ENCODE measurements at regions of chr5 and their contacts with region 1.

Region 1: DNA sequence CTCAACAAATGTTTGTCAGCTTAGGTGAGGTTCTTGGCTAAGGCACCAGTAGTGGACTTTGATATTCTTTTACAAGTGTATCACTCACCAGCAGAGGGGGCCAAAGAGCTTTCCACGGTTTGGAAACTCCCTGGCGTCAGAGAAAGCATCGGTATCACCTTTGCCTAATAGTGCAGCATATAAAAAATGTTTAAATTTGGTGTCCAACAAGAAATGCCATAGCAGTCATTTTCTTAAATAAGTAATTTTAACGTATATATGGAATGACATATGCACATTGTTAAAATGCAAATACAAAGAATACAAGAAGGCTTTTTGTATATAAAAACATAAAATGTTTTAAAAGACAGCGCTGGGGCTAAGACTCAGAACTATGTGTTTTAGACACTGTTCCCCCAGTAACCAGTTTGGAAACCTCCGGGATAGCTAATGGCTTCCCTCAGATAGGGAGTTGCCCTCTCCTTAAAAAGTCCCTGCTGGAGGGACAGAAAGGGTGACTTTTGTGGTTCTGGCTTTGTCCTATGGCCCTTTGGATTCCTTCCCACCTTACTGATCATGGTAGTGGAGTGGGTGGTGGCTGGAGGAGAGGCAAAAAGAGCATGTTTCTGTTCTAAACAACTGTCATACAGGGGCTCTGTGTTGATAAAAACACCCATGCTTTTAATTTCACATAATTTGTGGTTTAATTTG is 124.6 kb downstream of the GPBP1 start:
- DNase-seq: peak; percentile 45
- H3K4me3 ChIP-seq: peak overlapping the region in 1 of 2 experiments; percentile 35; a peak in 1 of 4 replicates
- H3K27ac ChIP-seq: peak overlapping the region; percentile 43 to 63; a peak in 3 of 4 replicates
- H3K4me1 ChIP-seq: peaks cover 0 to 5% of the 10 kb centered on the region in 2 experiments; a peak in 3 of 4 replicates
- H3K27me3 ChIP-seq: no peaks in the 10 kb centered on the region
- CTCF ChIP-seq: peak; percentile 89
- EP300 ChIP-seq: no peak
- RAD21 ChIP-seq: peak; percentile 92

Region 2: GRCh38 chr5:56909294-56910209 is 388.9 kb before region 1 on chr5 and contains the start of gene SETD9:
- CTCF ChIA-PET with region 1: no interaction called
- POLR2A ChIA-PET with region 1: no interaction called
- DNase-seq: peak; percentile 98
- H3K4me3 ChIP-seq: peak within 1 kb of the TSS; percentile 77 to 82
- H3K27ac ChIP-seq: peak within 1 kb of the TSS; percentile 95 to 98
- H3K4me1 ChIP-seq: peaks cover 0 to 10% of the 10 kb centered on the region in 2 experiments; a peak in 2 of 4 replicates
- H3K27me3 ChIP-seq: no peaks in the 10 kb centered on the region
- CTCF ChIP-seq: no peak
- EP300 ChIP-seq: no peak; a peak in 1 of 4 replicates
- RAD21 ChIP-seq: no peak; the same call in 1 of the 2 replicates
- polyA plus RNA-seq, gene SETD9: 12.2 and 16.8 TPM in 2 replicates

Region 3: DNA sequence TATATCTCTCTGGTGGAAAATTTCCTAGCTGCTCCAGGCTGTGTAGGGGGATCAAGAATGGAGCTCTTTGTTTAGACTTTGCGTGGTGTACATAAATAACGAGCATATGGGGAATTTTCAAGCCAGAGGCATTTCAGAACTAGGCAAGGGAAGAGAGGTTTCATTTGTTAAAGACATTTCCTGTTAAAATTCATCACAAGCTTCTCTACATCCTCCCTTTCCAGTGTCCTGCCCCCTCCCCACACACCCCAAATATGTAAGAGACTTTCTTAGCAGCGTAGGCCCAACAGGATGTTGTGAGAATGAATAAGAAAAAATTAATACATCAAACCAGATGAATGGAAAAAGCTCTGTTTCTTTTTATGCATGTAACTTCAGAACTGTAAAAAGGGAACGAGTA is 25.7 kb after region 1 on chr5:
- CTCF ChIA-PET with region 1: interaction called, 17 read pairs
- POLR2A ChIA-PET with region 1: no interaction called
- DNase-seq: no peak
- H3K4me3 ChIP-seq: no peak overlapping the region
- H3K27ac ChIP-seq: no peak overlapping the region; a peak in 1 of 4 replicates
- H3K4me1 ChIP-seq: no peaks in the 10 kb centered on the region
- H3K27me3 ChIP-seq: no peaks in the 10 kb centered on the region
- CTCF ChIP-seq: no peak
- EP300 ChIP-seq: no peak
- RAD21 ChIP-seq: no peak

Region 4: GRCh38 chr5:57650360-57651069 is 352.1 kb after region 1 on chr5:
- CTCF ChIA-PET with region 1: interaction called, 11 read pairs
- POLR2A ChIA-PET with region 1: no interaction called
- DNase-seq: peak; percentile 5
- H3K4me3 ChIP-seq: no peak overlapping the region; a peak in 1 of 4 replicates
- H3K27ac ChIP-seq: no peak overlapping the region
- H3K4me1 ChIP-seq: no peaks in the 10 kb centered on the region
- H3K27me3 ChIP-seq: no peaks in the 10 kb centered on the region
- CTCF ChIP-seq: peak; percentile 65
- EP300 ChIP-seq: no peak
- RAD21 ChIP-seq: peak; percentile 63

Region 5: DNA sequence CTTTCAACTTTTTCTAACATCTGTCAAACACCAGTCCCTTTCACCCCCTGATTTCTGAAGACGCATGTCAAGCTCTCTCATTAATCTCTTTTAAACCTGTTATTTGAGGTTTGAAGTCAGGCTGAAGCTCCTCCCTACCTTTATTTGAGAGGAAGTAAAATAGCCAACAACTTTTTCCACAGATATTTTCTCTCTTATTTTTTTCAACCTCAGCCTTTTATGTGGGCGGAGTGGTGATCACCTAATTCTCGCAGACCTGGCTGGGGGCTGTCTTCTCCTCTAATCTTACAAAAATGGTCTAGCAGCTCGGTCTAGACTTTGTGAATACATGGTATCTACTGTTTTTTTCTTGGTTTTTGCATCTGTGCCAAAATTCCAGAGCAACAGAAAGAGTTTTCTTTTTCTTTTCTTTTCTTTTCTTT is 579.9 kb after region 1 on chr5:
- CTCF ChIA-PET with region 1: interaction called, 10 read pairs
- POLR2A ChIA-PET with region 1: no interaction called
- DNase-seq: no peak
- H3K4me3 ChIP-seq: no peak overlapping the region
- H3K27ac ChIP-seq: no peak overlapping the region
- H3K4me1 ChIP-seq: no peaks in the 10 kb centered on the region
- H3K27me3 ChIP-seq: no peaks in the 10 kb centered on the region
- CTCF ChIP-seq: no peak
- EP300 ChIP-seq: no peak
- RAD21 ChIP-seq: no peak

Region 6: DNA sequence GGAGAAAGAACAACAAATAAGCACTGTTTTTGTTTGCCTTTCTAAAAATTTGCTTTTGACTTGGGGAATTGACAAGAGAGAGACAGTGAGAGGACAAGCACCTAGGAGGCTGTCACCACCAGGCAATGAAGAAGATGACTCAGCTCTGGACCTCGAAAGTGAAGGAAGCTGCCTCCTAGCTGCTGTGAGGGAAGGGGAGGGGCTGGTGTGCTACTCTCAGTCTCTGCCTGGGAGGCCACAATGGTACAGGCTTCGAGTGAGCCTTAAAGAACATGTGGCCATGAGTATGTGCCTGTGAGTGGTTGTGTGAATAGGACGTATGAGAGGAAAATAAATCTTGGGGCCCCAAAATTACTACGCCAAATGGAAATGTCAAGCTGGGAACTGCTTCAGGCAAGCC is 1168.5 kb after region 1 on chr5:
- CTCF ChIA-PET with region 1: interaction called, 96 read pairs
- POLR2A ChIA-PET with region 1: no interaction called
- DNase-seq: no peak
- H3K4me3 ChIP-seq: no peak overlapping the region
- H3K27ac ChIP-seq: no peak overlapping the region
- H3K4me1 ChIP-seq: peaks cover 0 to 6% of the 10 kb centered on the region in 2 experiments; a peak in 1 of 4 replicates
- H3K27me3 ChIP-seq: no peaks in the 10 kb centered on the region
- CTCF ChIP-seq: no peak
- EP300 ChIP-seq: no peak
- RAD21 ChIP-seq: no peak